Activated B cell treated with CpG ODN at 0.5 μM for 24 hours (primary cell): ENCODE measurements at regions of chr1 and their contacts with region 1.

Region 1: DNA sequence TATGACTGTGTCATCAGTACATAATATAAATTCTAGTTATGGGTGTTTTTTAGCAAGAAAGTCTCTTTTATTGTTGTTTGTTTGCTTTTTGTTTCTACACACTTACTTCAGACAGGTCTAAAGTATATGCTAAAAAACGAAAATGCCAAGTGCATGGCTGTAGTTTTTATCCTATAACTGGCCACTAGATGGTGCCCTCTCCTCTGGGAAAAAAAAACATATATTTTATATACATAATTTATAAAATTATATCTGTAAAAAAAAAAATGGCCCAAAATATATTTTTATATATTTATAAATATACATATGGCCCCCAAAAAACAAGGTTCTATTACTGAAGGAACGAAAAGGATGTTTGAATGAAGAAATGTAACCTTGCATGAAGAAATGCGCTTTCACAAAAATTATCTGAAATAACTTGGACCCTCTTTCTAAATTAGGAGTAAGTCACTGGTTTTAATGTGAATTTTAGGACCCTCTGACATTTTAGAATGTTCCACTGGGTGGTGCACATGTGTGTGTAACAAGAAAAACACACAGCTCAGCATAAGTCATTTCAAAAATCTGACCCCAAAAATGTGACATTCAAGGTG is 93.5 kb downstream of the TTLL7 start:
- DNase-seq: no peak
- ATAC-seq: no peak
- H3K4me3 Mint-ChIP-seq: no peak overlapping the region
- H3K27ac Mint-ChIP-seq: no peak overlapping the region
- H3K4me1 Mint-ChIP-seq: no peaks in the 10 kb centered on the region
- H3K27me3 Mint-ChIP-seq: peaks cover 4% of the 10 kb centered on the region
- CTCF ChIP-seq: peak; percentile 65

Region 2: DNA sequence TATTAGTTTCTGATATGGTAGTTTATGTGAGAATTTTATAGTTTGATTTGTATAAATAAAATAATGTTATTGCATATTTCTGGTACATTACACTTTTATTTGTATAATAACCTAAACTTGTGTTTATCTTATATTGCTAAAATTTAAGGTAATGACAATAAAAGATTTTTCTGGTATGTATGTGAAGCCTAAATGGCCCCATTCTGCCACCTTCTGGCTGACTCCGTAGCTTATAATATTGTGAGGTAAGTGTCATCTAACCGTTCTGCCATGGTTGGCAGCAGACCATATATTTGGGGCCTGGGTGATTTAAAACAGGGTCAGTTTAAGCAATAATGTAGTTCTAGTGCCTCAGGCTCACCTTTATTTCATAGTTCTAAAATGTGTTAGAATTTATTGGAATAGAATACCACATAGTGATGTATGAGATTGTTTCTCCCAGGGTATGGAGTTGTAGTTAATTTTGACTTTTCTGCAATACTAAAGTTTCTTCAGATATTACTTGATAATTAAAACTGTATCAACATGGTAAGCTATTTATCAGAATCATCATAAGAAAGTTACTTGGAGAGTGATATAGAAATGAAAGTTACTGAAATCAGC is 217.5 kb after region 1 on chr1:
- CTCF ChIA-PET with region 1: interaction called, 3 read pairs
- POLR2A ChIA-PET with region 1: no interaction called
- intact Hi-C with region 1: loop called (anchors 1 kb)
- DNase-seq: no peak
- ATAC-seq: peak; percentile 49
- H3K4me3 Mint-ChIP-seq: no peak overlapping the region
- H3K27ac Mint-ChIP-seq: no peak overlapping the region
- H3K4me1 Mint-ChIP-seq: no peaks in the 10 kb centered on the region
- H3K27me3 Mint-ChIP-seq: no peaks in the 10 kb centered on the region
- CTCF ChIP-seq: no peak

Region 3: GRCh38 chr1:84433258-84434080 is 528.1 kb after region 1 on chr1:
- CTCF ChIA-PET with region 1: no interaction called
- POLR2A ChIA-PET with region 1: no interaction called
- intact Hi-C with region 1: loop called (anchors 2 kb)
- DNase-seq: no peak
- ATAC-seq: peak; percentile 59
- H3K4me3 Mint-ChIP-seq: peak overlapping the region; percentile 65
- H3K27ac Mint-ChIP-seq: peak overlapping the region; percentile 15
- H3K4me1 Mint-ChIP-seq: peaks cover 9% of the 10 kb centered on the region
- H3K27me3 Mint-ChIP-seq: no peaks in the 10 kb centered on the region
- CTCF ChIP-seq: peak; percentile 48

Region 4: GRCh38 chr1:84753516-84754385 is 848.3 kb after region 1 on chr1:
- CTCF ChIA-PET with region 1: interaction called, 3 read pairs
- POLR2A ChIA-PET with region 1: no interaction called
- intact Hi-C with region 1: loop called (anchors 1 kb)
- DNase-seq: peak; percentile 34
- ATAC-seq: peak; percentile 81
- H3K4me3 Mint-ChIP-seq: no peak overlapping the region
- H3K27ac Mint-ChIP-seq: no peak overlapping the region
- H3K4me1 Mint-ChIP-seq: peaks cover 4% of the 10 kb centered on the region
- H3K27me3 Mint-ChIP-seq: peaks cover 22% of the 10 kb centered on the region
- CTCF ChIP-seq: peak; percentile 51

Region 5: DNA sequence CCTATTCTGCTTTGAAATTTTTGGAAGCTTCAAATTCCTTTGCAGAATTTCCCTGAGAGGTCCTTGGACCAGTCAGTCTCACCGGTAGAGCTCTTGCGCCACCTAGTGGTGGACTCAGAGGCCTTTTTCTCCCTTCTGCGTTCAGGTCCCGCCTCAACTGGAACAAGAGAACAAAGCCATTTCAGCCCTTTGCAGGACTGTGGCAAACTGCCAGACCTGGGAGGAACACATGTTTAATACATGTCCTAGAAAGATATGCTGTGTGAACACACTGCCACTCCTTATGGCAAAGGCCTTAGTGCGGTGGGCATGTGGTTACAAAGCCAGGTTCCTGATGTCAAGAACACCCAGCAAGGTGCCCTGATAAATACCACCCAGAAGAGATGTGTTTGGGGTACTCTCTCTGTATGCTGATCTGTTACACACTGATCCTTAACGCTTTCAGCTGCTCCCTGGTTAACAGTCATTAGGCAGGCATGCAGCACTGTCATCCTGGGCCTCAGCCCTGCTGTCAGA is 867.1 kb after region 1 on chr1:
- CTCF ChIA-PET with region 1: interaction called, 11 read pairs
- POLR2A ChIA-PET with region 1: no interaction called
- intact Hi-C with region 1: loop called (anchors 1 kb)
- DNase-seq: peak; percentile 58
- ATAC-seq: peak; percentile 71
- H3K4me3 Mint-ChIP-seq: no peak overlapping the region
- H3K27ac Mint-ChIP-seq: no peak overlapping the region
- H3K4me1 Mint-ChIP-seq: no peaks in the 10 kb centered on the region
- H3K27me3 Mint-ChIP-seq: peaks cover 5% of the 10 kb centered on the region
- CTCF ChIP-seq: peak; percentile 43

Region 6: GRCh38 chr1:84936116-84936810 is 1030.9 kb after region 1 on chr1:
- CTCF ChIA-PET with region 1: interaction called, 3 read pairs
- POLR2A ChIA-PET with region 1: no interaction called
- intact Hi-C with region 1: loop called (anchors 2 kb)
- DNase-seq: no peak
- ATAC-seq: peak; percentile 70
- H3K4me3 Mint-ChIP-seq: no peak overlapping the region
- H3K27ac Mint-ChIP-seq: no peak overlapping the region
- H3K4me1 Mint-ChIP-seq: peaks cover 4% of the 10 kb centered on the region
- H3K27me3 Mint-ChIP-seq: no peaks in the 10 kb centered on the region
- CTCF ChIP-seq: peak; percentile 99